ENCODE measurements at regions of chr16 and their contacts with region 1.

Region 1: GRCh38 chr16:88743693-88744576 is 37.6 kb downstream of the CTU2 start:
- DNase-seq: peak; percentile 86
- ATAC-seq: peak; percentile 60 to 67

Region 2: GRCh38 chr16:88452482-88453216 is 291.3 kb before region 1 on chr16:
- intact Hi-C with region 1: no loop called
- DNase-seq: peak; percentile 98
- ATAC-seq: peak; percentile 89 to 90

Region 3: GRCh38 chr16:88639231-88640038 is 104.5 kb before region 1 on chr16:
- intact Hi-C with region 1: no loop called
- DNase-seq: no peak
- ATAC-seq: no peak

Region 4: GRCh38 chr16:88785106-88785924 is 41.4 kb after region 1 on chr16 and contains the start of gene PIEZO1:
- intact Hi-C with region 1: loop called (anchors 5 kb)
- DNase-seq: peak; percentile 83
- ATAC-seq: peak; percentile 73 to 74
- total RNA-seq, gene PIEZO1: 50.6 to 63.6 TPM

Region 5: DNA sequence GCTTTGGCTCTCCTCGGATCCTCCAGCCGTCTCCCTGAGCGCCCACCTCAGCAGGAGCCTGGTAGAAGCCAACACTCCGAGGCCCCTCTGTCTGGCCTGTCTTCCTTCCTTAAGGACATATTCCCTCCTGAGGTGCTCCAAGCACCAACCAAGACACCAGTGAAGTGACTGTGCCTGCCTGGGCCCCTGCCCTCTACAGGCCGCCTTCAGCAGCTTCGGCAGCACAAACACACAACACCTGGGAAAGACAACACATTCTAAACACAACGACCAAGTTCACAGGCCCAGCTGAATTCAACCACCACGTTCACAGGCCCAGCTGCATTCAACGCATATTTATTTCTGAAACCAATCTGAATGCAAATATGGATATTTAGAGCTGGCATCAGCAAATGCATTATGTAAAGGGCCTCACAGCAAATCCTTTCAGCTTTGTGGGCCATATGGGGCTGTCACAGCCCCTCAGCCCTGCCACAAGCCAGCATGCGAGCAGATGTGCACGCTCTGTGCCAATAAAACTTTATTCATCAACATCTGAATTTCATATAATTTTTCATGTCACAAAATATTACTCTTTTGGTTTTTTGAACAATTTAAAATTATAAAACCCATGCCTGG is 100.6 kb after region 1 on chr16:
- intact Hi-C with region 1: no loop called
- DNase-seq: no peak
- ATAC-seq: no peak